CD4-positive, alpha-beta T cell (primary cell): ENCODE measurements at regions of chr9 and their contacts with region 1.

Region 1: GRCh38 chr9:94726495-94727191 is at the start of gene AOPEP:
- DNase-seq: peak; percentile 98 to 100 (median 99)
- ATAC-seq: peak; percentile 97
- H3K4me3 ChIP-seq: peak within 1 kb of the TSS; percentile 86
- H3K4me3 Mint-ChIP-seq: peak within 1 kb of the TSS; percentile 98
- H3K27ac ChIP-seq: peak within 1 kb of the TSS; percentile 88
- H3K27ac Mint-ChIP-seq: peak within 1 kb of the TSS; percentile 98
- H3K4me1 ChIP-seq: peaks cover 12% of the 10 kb centered on the region
- H3K4me1 Mint-ChIP-seq: peaks cover 22% of the 10 kb centered on the region
- H3K27me3 ChIP-seq: no peaks in the 10 kb centered on the region
- H3K27me3 Mint-ChIP-seq: no peaks in the 10 kb centered on the region
- CTCF ChIP-seq: no peak
- total RNA-seq, gene AOPEP: 6.9 to 7.0 TPM

Region 2: DNA sequence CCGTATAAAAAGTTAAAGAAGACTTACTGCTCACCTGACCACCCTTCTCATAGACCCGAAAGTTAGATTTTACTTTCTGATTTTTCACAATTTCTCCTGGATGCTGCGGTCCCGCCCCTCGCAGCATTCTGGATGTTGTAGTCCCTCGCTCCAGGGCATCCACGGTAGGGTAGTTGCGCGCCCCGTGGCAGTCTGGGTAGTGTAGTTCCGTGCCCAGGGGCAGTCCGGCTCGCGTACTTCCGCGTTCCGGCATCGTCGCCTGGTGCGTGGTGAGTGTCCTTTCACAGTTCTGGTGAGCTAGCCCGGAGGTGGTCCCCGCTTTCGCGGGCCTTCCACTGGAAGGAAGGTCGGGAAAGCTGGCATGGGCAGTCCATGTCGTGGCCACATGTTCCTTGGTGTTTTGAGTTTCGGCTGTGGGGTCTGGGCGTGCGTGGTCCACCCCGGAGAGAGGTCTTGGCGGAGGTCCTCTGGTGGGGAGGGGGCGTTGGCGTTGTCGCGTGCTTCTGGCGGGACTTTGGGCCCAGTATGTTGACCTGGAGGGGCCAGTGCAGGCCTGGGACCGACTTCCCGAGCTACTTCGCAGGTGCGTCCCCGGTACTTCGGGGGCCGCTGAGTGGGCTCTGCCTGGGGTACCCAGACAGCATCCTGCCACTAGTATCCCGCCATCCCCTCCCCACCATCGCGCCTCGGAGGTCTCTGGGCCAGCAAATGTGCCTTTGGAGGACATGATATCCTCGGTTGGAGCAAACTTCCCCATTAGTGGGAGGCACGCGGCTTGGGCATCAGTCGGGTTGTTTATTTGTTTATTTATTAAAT is 467.4 kb before region 1 on chr9 and contains the start of gene ZNF169:
- CTCF ChIA-PET with region 1: no interaction called
- POLR2A ChIA-PET with region 1: no interaction called
- intact Hi-C with region 1: loop called in 1 of 2 experiments (anchors 10 kb)
- DNase-seq: peak; percentile 74 to 91 (median 82)
- ATAC-seq: peak; percentile 100
- H3K4me3 ChIP-seq: peak within 1 kb of the TSS; percentile 98
- H3K4me3 Mint-ChIP-seq: peak within 1 kb of the TSS; percentile 98
- H3K27ac ChIP-seq: peak within 1 kb of the TSS; percentile 35 to 38
- H3K27ac Mint-ChIP-seq: peak within 1 kb of the TSS; percentile 88
- H3K4me1 ChIP-seq: peaks cover 21% of the 10 kb centered on the region
- H3K4me1 Mint-ChIP-seq: peaks cover 46% of the 10 kb centered on the region
- H3K27me3 ChIP-seq: peaks cover 0 to 6% of the 10 kb centered on the region in 2 experiments
- H3K27me3 Mint-ChIP-seq: peaks cover 5% of the 10 kb centered on the region
- CTCF ChIP-seq: no peak
- total RNA-seq, gene ZNF169: 3.5 to 5.1 TPM

Region 3: GRCh38 chr9:94743035-94743954 is 16.7 kb after region 1 on chr9:
- CTCF ChIA-PET with region 1: no interaction called
- POLR2A ChIA-PET with region 1: no interaction called
- intact Hi-C with region 1: no loop called
- DNase-seq: no peak
- ATAC-seq: no peak
- H3K4me3 ChIP-seq: no peak overlapping the region
- H3K4me3 Mint-ChIP-seq: no peak overlapping the region
- H3K27ac ChIP-seq: no peak overlapping the region
- H3K27ac Mint-ChIP-seq: no peak overlapping the region
- H3K4me1 ChIP-seq: no peaks in the 10 kb centered on the region
- H3K4me1 Mint-ChIP-seq: no peaks in the 10 kb centered on the region
- H3K27me3 ChIP-seq: no peaks in the 10 kb centered on the region
- H3K27me3 Mint-ChIP-seq: no peaks in the 10 kb centered on the region
- CTCF ChIP-seq: no peak

Region 4: GRCh38 chr9:94860968-94861871 is 134.6 kb after region 1 on chr9:
- CTCF ChIA-PET with region 1: no interaction called
- POLR2A ChIA-PET with region 1: interaction called, 11 read pairs
- intact Hi-C with region 1: no loop called
- DNase-seq: peak; percentile 45 to 93 (median 61)
- ATAC-seq: peak; percentile 88
- H3K4me3 ChIP-seq: peak overlapping the region; percentile 36
- H3K4me3 Mint-ChIP-seq: peak overlapping the region; percentile 62
- H3K27ac ChIP-seq: peak overlapping the region in 1 of 2 donors; percentile 9
- H3K27ac Mint-ChIP-seq: peak overlapping the region; percentile 79
- H3K4me1 ChIP-seq: peaks cover 29% of the 10 kb centered on the region
- H3K4me1 Mint-ChIP-seq: peaks cover 47% of the 10 kb centered on the region
- H3K27me3 ChIP-seq: no peaks in the 10 kb centered on the region
- H3K27me3 Mint-ChIP-seq: no peaks in the 10 kb centered on the region
- CTCF ChIP-seq: no peak

Region 5: DNA sequence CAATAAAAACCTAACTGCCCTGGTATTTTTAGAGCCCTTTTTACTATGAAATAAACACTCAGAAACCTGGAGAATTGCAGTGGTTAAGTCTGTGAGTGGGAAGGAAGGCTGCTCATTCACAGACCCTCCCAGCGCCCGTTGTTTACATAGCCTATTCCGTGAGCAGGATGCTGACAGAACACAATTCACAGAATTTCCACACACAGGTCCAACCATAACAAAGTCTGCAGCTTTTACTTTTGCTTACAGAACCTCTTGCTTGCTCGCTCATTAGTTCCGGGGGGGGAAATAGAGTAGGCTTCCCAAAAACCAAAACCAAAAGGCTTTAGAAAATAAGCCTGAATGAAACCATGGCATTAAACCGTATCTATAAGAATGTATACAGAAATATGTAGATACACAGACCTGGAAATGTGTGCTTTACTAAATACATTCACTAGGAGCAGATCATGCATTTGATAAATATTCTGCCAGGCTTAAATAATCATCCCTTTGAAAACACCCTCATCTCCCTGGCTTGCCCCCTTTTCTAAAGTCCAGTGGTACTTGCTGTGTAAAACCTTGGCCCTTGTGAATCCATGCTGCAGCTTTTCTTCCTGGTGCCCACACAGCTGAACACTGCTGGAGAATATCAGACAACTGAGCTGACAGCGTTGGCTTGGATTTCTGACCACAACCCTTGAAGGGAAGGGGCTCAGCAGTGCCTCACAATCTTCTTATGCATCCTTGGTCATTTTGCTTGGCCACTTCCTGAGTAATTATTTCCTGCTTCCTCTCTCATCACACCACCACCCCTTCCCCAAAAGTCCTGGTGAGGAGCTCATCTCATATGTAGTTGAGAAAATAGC is 462.8 kb after region 1 on chr9:
- CTCF ChIA-PET with region 1: no interaction called
- POLR2A ChIA-PET with region 1: no interaction called
- intact Hi-C with region 1: no loop called
- DNase-seq: peak in 1 of 14 experiments; percentile 54
- ATAC-seq: no peak
- H3K4me3 ChIP-seq: no peak overlapping the region
- H3K4me3 Mint-ChIP-seq: no peak overlapping the region
- H3K27ac ChIP-seq: no peak overlapping the region
- H3K27ac Mint-ChIP-seq: no peak overlapping the region
- H3K4me1 ChIP-seq: peaks cover 6% of the 10 kb centered on the region
- H3K4me1 Mint-ChIP-seq: peaks cover 26% of the 10 kb centered on the region
- H3K27me3 ChIP-seq: no peaks in the 10 kb centered on the region
- H3K27me3 Mint-ChIP-seq: no peaks in the 10 kb centered on the region
- CTCF ChIP-seq: no peak

Region 6: DNA sequence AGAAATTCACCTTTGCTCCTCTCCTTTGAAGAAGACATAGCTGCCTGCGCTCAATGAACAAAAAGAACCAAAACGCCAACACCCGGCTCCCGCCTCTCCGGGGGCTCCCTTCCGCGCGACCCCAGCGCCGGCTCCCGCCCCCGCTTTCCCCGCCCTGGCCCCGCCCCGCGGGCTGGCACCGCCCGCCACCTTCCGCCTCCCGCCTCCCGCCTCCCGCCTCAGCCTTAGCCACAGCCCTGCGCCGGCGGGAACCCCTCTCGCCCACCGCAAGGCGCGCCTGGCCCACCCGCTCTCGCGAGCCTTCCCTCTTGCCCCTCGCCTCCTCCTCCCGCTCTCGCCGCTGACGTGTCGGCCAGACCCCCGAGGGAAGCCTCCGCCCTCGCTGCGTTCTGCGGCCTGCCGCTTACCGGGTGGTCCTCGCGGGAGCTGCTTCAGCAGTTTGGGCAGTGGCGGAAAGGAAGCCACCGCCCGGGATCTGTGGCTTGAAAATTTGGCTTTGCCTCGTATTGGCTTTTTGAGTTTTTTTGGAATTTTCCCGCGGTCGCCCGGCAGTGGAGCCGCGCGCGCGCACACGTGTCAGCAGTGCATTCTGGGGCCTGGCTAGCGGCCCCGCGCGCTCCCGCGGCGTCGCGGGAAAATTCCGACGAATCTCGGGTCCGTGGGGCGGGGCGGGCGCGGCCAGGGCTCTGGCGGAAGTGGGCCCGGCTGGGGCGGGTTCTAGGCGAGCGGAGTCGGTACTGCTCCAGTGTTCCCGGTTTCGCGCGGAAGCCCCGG is 590.7 kb after region 1 on chr9 and contains the start of gene FANCC:
- CTCF ChIA-PET with region 1: no interaction called
- POLR2A ChIA-PET with region 1: no interaction called
- intact Hi-C with region 1: loop called in 1 of 2 experiments (anchors 2 kb)
- DNase-seq: peak; percentile 65 to 92 (median 82)
- ATAC-seq: peak; percentile 88
- H3K4me3 ChIP-seq: peak within 1 kb of the TSS; percentile 96
- H3K4me3 Mint-ChIP-seq: peak within 1 kb of the TSS; percentile 96
- H3K27ac ChIP-seq: peak within 1 kb of the TSS; percentile 37 to 42
- H3K27ac Mint-ChIP-seq: peak within 1 kb of the TSS; percentile 86
- H3K4me1 ChIP-seq: peaks cover 14% of the 10 kb centered on the region
- H3K4me1 Mint-ChIP-seq: peaks cover 27% of the 10 kb centered on the region
- H3K27me3 ChIP-seq: no peaks in the 10 kb centered on the region
- H3K27me3 Mint-ChIP-seq: peaks cover 9% of the 10 kb centered on the region
- CTCF ChIP-seq: no peak
- total RNA-seq, gene FANCC: 5.7 to 6.3 TPM

Region 7: DNA sequence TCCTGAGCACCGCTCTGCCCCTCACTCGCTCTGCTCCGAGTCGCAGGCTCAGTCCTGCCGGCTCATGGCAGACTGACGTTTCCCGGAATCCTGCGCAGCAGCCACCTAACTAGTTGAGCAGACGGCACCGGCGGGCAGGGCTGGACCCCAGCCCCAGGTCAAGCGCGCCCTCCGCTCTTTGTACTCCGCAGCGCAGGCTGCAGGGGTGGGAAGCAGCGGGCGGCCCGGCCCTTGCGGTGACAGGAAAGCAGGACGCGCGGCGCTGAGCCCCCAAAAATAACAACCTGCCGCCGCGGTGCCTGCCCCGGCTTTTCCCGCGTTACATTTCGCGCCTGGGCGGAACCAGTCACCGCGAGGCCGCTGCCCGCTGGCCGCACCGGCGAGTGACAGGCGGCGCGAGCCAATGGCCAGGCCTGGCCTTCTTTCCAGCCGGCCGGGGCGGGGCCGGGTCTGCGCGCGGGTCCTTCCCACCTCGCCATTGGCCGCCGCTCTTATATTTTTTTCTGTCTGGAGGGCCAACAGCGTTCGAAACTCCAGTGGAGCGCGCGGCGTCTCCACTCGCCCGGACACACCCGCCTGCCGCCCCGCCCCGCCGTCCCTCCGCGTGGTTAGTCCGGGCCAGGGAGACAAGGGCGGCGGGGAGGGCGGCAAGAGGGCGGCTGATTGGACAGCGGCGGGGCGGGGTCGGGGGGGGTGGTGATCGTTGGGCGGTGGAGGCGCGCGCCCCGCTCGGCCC is 1691.6 kb after region 1 on chr9 and contains the start of gene ZNF367:
- CTCF ChIA-PET with region 1: no interaction called
- POLR2A ChIA-PET with region 1: no interaction called
- intact Hi-C with region 1: loop called in 1 of 2 experiments (anchors 10 kb)
- DNase-seq: peak; percentile 76 to 95 (median 90)
- ATAC-seq: peak; percentile 65
- H3K4me3 ChIP-seq: peak within 1 kb of the TSS; percentile 97
- H3K4me3 Mint-ChIP-seq: peak within 1 kb of the TSS; percentile 93
- H3K27ac ChIP-seq: peak within 1 kb of the TSS; percentile 93 to 94
- H3K27ac Mint-ChIP-seq: peak within 1 kb of the TSS; percentile 93
- H3K4me1 ChIP-seq: peaks cover 39% of the 10 kb centered on the region
- H3K4me1 Mint-ChIP-seq: peaks cover 36% of the 10 kb centered on the region
- H3K27me3 ChIP-seq: no peaks in the 10 kb centered on the region
- H3K27me3 Mint-ChIP-seq: no peaks in the 10 kb centered on the region
- CTCF ChIP-seq: no peak
- total RNA-seq, gene ZNF367: 6.5 to 6.7 TPM